ENCODE measurements at regions of chr4 and their contacts with region 1.

Region 1: DNA sequence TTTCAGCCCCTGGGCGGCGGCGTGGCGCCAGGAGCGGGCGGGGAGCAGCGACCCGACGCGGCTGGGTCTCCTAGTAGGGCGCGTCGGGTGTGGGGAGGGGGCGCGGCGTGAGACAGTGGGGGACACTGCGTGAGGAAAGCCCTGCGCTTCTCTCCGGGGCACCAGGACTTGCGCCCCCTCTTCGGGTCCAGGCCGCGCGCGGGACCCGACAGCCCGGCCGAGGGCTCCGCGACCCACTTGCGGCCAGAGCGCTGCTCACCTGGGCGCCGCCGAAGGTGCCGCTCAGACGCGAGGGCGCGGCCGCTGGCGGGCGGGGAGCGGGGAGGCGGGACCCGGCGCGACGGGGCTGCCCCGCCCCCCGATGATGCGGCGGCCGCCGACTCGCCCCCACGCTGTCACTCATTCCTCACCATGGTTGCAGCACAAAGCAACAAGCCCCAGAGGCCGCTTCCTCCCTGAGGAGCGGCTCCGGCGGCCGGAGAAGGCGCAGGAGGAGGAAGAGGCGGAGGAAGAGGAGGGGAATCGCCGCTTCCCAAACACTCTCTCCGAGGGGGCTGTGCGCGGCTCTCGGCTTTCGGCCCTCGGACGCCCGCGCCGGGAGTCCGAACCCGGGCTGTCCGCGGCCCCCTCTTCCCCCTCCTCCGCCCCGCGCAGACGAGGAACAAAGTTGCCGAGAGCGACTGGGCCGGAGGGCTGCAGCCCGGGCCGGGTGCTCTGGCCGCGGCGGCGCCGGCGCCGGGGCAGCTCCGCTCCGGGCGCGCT is at the start of gene RAPGEF2:
- DNase-seq: peak; percentile 67 to 94 (median 90)
- H3K4me3 ChIP-seq: peak within 1 kb of the TSS; percentile 70 to 100 (median 93)
- H3K27ac ChIP-seq: peak within 1 kb of the TSS; percentile 61 to 98 (median 92)
- H3K27me3 ChIP-seq: no peaks in the 10 kb centered on the region
- CTCF ChIP-seq: peak in 12 of 56 donors; percentile 7 to 37 (median 22)
- total RNA-seq, gene RAPGEF2: 98.7 to 270 (median 178) TPM

Region 2: DNA sequence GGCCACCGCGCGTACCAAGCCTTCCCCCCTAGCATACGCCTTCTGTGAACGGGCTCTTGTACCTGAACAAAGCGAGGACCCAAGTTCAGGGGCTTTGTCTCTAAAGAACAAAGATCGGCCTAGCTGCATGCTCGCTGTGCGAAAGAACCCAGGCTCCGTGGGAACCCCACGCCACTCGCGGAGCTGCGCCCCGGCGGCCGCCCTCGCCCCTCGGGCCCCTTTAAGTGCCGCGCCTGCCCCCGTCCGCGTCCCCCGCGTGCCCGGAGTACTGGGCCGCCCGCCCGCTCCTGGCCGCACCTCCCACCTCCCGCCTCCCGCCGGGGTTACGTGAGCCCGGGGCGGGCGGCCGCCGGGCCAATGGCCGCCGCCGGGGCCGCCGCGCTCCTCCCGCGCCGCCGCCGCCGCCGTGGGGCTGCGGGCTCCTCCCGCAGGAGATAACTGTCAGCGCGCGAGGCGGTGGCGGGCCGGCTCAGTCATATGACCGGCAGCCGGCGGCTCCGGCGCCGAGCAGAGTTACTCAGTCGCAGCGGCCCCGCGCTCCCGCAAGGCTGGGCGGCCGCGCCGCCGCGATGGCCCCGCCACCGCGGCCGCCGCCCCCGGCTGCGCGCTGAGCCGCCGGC is 334.1 kb before region 1 on chr4 and contains the start of gene FNIP2:
- intact Hi-C with region 1: loop called in 1 of 2 experiments (anchors 10 kb)
- DNase-seq: peak; percentile 74 to 91 (median 84)
- H3K4me3 ChIP-seq: peak within 1 kb of the TSS; percentile 67 to 98 (median 90)
- H3K27ac ChIP-seq: peak within 1 kb of the TSS; percentile 71 to 98 (median 95)
- H3K27me3 ChIP-seq: no peaks in the 10 kb centered on the region
- CTCF ChIP-seq: peak in 5 of 56 donors; percentile 5 to 23 (median 12)
- total RNA-seq, gene FNIP2: 38.5 to 72.7 (median 57.8) TPM

Region 3: GRCh38 chr4:158895797-158896576 is 206.8 kb before region 1 on chr4:
- intact Hi-C with region 1: loop called in 1 of 2 experiments (anchors 10 kb)
- DNase-seq: peak in 4 of 10 donors; percentile 14 to 58 (median 50)
- H3K4me3 ChIP-seq: no peak overlapping the region
- H3K27ac ChIP-seq: peak overlapping the region in 57 of 59 donors; percentile 1 to 83 (median 63)
- H3K27me3 ChIP-seq: no peaks in the 10 kb centered on the region
- CTCF ChIP-seq: peak in 3 of 56 donors; percentile 6 to 20 (median 18)

Region 4: DNA sequence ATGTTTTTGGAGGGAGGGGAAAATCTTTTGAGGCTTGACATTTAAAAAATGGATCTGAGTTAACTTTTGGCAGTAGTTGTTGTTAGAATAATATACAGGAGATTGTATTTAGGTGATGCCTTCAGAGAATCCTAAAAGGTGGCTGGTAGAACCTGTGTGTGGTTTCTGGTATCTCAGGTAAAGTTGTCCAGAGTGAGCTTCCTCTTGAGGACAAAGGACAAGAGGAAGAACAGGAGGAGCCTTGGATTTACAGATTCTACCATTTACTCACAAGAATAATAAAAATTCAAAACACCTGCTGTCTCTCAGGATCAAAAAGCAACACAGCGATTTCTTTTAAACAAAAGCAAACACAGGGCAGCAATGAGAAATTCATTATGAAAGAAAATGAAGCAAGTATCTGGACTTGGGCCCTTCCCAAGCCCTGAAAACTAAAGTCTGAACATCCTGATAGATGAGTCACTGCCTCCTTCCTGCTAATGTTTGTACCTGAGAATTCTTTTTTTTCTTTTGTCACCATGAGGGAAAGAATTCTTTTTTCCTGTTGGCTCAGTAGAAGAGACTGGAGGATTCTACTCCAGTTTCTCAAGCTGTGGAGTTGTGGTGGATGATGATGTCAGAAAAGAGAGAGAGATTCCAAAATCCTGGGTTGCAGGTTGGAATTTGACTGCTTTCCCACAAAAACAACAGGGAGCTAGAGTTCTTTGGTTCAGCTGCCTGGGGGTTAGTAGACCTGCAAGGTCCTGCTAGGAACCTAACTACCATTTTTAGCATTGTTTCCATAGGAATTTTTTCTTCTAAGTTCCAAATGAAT is 31.4 kb before region 1 on chr4:
- intact Hi-C with region 1: loop called in 1 of 2 experiments (anchors 2 kb)
- DNase-seq: no peak
- H3K4me3 ChIP-seq: peak overlapping the region in 1 of 59 donors; percentile 8
- H3K27ac ChIP-seq: peak overlapping the region in 48 of 59 donors; percentile 1 to 76 (median 43)
- H3K27me3 ChIP-seq: no peaks in the 10 kb centered on the region
- CTCF ChIP-seq: no peak

Region 5: DNA sequence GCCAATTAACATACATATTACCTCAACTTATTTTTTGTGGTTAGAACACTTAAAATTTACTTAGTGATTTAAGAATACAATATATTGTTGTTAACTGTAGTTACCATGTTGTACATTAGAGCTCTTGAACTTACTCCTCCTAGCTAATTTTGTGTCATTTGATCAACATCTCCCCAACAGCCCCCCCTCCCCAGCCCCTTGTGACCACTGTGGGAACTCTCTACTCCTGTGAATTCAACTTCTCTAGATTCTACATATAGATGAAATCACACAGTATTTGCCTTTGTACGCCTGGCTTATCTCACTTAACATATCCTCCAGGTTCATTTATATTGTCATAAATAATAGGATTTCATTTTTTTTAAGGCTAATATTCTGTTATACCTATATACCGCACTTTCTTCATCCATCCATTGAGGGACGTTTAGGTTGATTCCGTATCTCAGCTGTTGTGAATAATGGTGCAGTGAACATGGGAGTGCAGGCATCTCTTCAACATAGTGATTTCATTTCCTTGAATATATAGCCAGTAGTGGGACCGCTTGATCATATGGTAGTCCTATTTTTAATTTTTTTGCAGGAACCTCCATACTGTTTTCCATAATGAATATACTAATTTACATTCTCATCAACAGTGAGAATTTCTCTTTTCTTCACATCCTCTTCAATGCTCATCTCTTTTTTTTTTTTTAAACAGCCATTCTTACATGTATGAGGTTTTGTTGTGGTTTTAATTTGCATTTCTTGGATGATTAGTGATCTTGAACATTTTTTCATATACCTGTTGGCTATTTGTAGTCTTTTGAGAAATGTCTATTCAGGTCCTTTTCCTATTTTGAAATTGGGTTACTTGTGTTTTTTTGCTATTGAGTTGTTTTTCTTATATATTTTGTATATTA is 66.8 kb after region 1 on chr4:
- intact Hi-C with region 1: loop called in 1 of 2 experiments (anchors 5 kb)
- DNase-seq: no peak
- H3K4me3 ChIP-seq: no peak overlapping the region
- H3K27ac ChIP-seq: no peak overlapping the region
- H3K27me3 ChIP-seq: no peaks in the 10 kb centered on the region
- CTCF ChIP-seq: no peak

Region 6: DNA sequence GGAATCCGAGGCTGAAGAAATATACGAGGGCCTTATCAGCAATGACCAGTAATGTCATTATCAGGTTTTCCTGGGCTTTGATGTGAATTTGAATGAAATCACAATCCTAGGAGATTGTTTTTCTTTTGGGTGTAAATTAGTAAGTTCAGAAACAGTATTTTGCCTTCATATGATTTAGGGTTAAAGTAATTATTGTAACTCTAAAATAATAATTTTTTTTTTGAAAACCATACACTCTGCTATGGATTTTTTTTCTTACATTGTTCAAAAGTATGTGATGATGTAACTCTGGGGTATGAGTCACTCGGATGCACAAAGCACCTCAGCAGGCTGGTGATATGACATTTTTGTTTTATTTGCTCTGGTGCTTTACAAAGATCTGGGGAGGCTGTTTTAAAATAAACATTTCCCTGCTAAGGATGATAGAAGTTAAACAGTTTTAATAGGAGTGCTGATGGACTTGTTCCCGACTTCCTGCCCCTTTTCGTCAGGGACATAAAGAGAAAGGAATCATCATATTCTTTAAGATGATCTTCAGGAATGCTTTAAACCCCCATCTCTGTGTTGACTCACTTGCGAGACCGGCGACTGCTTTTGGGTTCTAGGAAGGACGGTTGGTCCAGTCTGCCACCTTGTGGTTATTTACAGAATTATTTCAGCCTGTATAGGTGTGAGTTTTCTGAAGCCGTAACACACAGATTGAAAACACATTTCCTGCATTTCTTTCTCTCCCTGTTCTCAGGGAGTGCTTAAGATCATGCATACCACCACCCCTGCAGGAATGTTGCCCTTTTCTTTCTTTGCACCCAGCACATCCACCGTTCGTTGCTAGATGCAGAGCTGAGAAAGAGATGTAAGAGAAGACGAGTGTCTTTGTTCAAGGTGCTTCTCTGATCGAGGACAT is 72.5 kb after region 1 on chr4:
- intact Hi-C with region 1: loop called (anchors 5 kb)
- DNase-seq: peak in 7 of 10 donors; percentile 54 to 75 (median 59)
- H3K4me3 ChIP-seq: peak overlapping the region in 56 of 59 donors; percentile 5 to 62 (median 36)
- H3K27ac ChIP-seq: peak overlapping the region in 46 of 59 donors; percentile 0 to 78 (median 46)
- H3K27me3 ChIP-seq: no peaks in the 10 kb centered on the region
- CTCF ChIP-seq: peak; percentile 57 to 96 (median 88)

Measured in dorsolateral prefrontal cortex (tissue), 120 donors.